K562 (cell line): ENCODE measurements at regions of chr19 and their contacts with region 1.

Region 1: GRCh38 chr19:17996826-17997316 is 11.1 kb upstream of the ARRDC2 start:
- DNase-seq: peak; percentile 82 to 90 (median 84)
- ATAC-seq: peak; percentile 84
- H3K4me3 ChIP-seq: no peak overlapping the region
- H3K27ac ChIP-seq: no peak overlapping the region
- H3K4me1 ChIP-seq: peaks cover 27 to 62% of the 10 kb centered on the region in 2 experiments
- H3K27me3 ChIP-seq: no peaks in the 10 kb centered on the region
- CTCF ChIP-seq: peak; percentile 96 to 99 (median 98)
- EP300 ChIP-seq: no peak
- POLR2A ChIP-seq: no peak
- RAD21 ChIP-seq: peak; percentile 97 to 99

Region 2: DNA sequence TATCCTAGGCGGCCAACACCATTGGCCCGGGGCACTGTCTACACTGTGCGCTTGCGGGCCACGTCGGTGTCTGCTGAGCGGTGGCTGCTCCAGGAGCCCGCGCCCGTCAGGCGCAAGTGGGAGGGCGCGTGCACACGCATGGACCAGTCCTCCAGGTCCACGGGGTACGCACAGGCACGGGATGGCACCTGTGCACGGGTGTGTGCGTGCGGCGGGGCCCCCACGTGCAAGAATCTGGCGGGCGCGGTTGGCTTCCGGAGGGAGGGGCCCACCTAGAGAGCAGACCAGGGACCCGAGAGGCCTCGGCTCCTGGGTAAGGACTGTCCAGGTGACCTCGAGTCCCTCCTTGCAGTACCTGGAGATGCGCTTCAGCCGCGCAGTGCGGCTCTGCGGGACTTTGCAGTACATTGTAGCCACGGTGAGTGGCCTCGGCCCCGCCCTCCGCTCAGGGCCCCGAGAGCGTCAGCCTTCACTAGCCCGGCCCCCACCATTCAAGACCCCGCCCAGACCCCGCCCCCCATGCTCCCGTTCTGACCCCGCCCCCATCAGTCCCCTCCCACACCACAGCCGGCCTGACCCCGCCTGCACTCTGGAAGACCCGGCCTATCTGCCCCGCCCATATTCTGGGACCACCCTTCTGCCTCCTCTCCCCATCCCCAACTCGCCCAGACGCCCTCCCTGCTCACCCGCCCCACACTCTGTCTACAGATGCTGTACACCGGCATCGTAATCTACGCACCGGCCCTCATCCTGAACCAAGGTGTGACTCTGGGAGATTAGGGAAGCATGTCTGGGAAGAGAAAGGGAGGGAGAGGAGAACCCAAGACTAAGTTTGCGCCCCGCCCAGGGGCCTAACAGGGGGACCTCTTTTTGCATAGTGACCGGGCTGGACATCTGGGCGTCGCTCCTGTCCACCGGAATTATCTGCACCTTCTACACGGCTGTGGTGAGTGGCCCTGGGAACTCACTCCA is 122.8 kb before region 1 on chr19:
- CTCF ChIA-PET with region 1: interaction called, 4 read pairs
- POLR2A ChIA-PET with region 1: no interaction called
- in situ Hi-C with region 1: no loop called
- intact Hi-C with region 1: loop called (anchors 2 kb)
- DNase-seq: peak; percentile 87 to 98 (median 96)
- ATAC-seq: peak; percentile 96
- H3K4me3 ChIP-seq: peak overlapping the region; percentile 43
- H3K27ac ChIP-seq: no peak overlapping the region
- H3K4me1 ChIP-seq: peaks cover 0 to 42% of the 10 kb centered on the region in 2 experiments; a peak in 3 of 5 replicates
- H3K27me3 ChIP-seq: peaks cover 9 to 17% of the 10 kb centered on the region in 2 experiments; a peak in 3 of 5 replicates
- CTCF ChIP-seq: no peak
- EP300 ChIP-seq: no peak
- POLR2A ChIP-seq: no peak
- RAD21 ChIP-seq: no peak

Region 3: GRCh38 chr19:17938092-17938845 is 58.6 kb before region 1 on chr19:
- CTCF ChIA-PET with region 1: interaction called, 113 read pairs
- POLR2A ChIA-PET with region 1: interaction called, 9 read pairs
- in situ Hi-C with region 1: loop called (anchors 10 kb)
- intact Hi-C with region 1: loop called (anchors 1 kb)
- DNase-seq: peak; percentile 73 to 87 (median 80)
- ATAC-seq: peak; percentile 81
- H3K4me3 ChIP-seq: no peak overlapping the region
- H3K27ac ChIP-seq: no peak overlapping the region
- H3K4me1 ChIP-seq: peaks cover 19 to 32% of the 10 kb centered on the region in 2 experiments
- H3K27me3 ChIP-seq: no peaks in the 10 kb centered on the region
- CTCF ChIP-seq: peak; percentile 95
- EP300 ChIP-seq: no peak
- POLR2A ChIP-seq: no peak
- RAD21 ChIP-seq: peak; percentile 96 to 97

Region 4: GRCh38 chr19:17947815-17948513 is 48.9 kb before region 1 on chr19:
- CTCF ChIA-PET with region 1: interaction called, 113 read pairs
- POLR2A ChIA-PET with region 1: interaction called, 9 read pairs
- in situ Hi-C with region 1: loop called (anchors 10 kb)
- intact Hi-C with region 1: loop called (anchors 2 kb)
- DNase-seq: peak; percentile 96 to 99 (median 96)
- ATAC-seq: peak; percentile 68
- H3K4me3 ChIP-seq: peak overlapping the region; percentile 51
- H3K27ac ChIP-seq: peak overlapping the region; percentile 31; the same call in 1 of the 3 replicates
- H3K4me1 ChIP-seq: peaks cover 58 to 80% of the 10 kb centered on the region in 2 experiments
- H3K27me3 ChIP-seq: no peaks in the 10 kb centered on the region
- CTCF ChIP-seq: no peak
- EP300 ChIP-seq: no peak
- POLR2A ChIP-seq: no peak
- RAD21 ChIP-seq: no peak

Region 5: DNA sequence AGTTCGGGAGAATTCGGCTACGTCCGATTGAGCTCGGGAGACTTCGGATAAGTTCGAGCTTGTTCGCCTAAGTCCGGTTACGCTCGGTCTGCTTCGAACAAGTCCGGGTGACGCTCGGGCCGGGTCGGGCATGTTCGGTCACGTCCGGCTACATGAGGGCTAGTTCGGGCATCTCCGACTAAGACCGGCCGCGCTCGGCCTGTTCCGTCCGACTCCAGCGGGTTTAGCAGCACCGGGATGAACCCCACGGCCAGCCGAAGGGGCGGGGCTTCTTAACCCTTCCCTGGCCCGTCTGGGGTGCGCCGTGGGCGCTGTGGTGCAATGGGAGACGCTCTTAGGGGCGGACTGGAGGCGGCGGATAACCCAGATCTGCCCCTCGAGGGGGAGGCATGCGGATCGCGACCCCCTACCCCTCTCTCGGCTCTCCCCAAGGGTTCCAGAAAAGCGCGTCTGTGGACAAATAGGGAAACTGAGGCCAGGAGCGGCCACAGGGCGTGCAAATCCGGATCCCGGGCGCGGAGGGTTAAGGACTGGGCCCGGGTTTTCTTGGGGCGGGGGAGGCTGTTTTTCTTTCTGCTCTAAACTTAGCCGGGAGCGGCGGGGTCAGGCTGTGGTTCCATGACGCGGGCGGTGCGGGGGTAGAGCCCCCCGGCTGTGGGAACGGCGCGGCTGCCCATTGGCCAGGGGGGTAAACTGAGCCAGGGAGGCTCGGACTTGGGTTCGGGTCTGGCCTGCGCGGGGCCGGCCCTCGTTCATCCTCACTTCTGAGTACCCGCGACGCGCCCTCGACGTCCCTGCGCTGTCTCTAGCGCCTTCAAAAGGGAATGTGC is 227.9 kb after region 1 on chr19:
- CTCF ChIA-PET with region 1: no interaction called
- POLR2A ChIA-PET with region 1: no interaction called
- in situ Hi-C with region 1: no loop called
- intact Hi-C with region 1: no loop called
- DNase-seq: peak; percentile 94 to 99 (median 96)
- ATAC-seq: peak; percentile 97
- H3K4me3 ChIP-seq: peak overlapping the region; percentile 48
- H3K27ac ChIP-seq: peak overlapping the region; percentile 84
- H3K4me1 ChIP-seq: peaks cover 23 to 61% of the 10 kb centered on the region in 2 experiments; a peak in 4 of 5 replicates
- H3K27me3 ChIP-seq: no peaks in the 10 kb centered on the region; a peak in 1 of 5 replicates
- CTCF ChIP-seq: no peak
- EP300 ChIP-seq: no peak
- POLR2A ChIP-seq: no peak
- RAD21 ChIP-seq: no peak